Caco-2 (cell line): ENCODE measurements at regions of chr4 and their contacts with region 1.

Region 1: GRCh38 chr4:47383829-47384427 is 79.6 kb downstream of the COMMD8 start:
- DNase-seq: peak in 1 of 2 experiments; percentile 5
- H3K4me3 ChIP-seq: no peak overlapping the region
- H3K4me3 Mint-ChIP-seq: no peak overlapping the region
- H3K27ac Mint-ChIP-seq: no peak overlapping the region
- H3K4me1 ChIP-seq: no peaks in the 10 kb centered on the region
- H3K4me1 Mint-ChIP-seq: no peaks in the 10 kb centered on the region
- H3K27me3 ChIP-seq: no peaks in the 10 kb centered on the region; the same call in 1 of the 2 replicates
- H3K27me3 Mint-ChIP-seq: no peaks in the 10 kb centered on the region
- CTCF ChIP-seq: peak; percentile 19 to 52

Region 2: GRCh38 chr4:47106561-47106960 is 277.4 kb before region 1 on chr4:
- CTCF ChIA-PET with region 1: no interaction called
- POLR2A ChIA-PET with region 1: no interaction called
- intact Hi-C with region 1: loop called (anchors 5 kb)
- DNase-seq: no peak
- H3K4me3 ChIP-seq: no peak overlapping the region
- H3K4me3 Mint-ChIP-seq: no peak overlapping the region
- H3K27ac Mint-ChIP-seq: no peak overlapping the region
- H3K4me1 ChIP-seq: no peaks in the 10 kb centered on the region
- H3K4me1 Mint-ChIP-seq: no peaks in the 10 kb centered on the region
- H3K27me3 ChIP-seq: no peaks in the 10 kb centered on the region
- H3K27me3 Mint-ChIP-seq: peaks cover 5% of the 10 kb centered on the region
- CTCF ChIP-seq: no peak

Region 3: GRCh38 chr4:47122592-47123291 is 261.2 kb before region 1 on chr4:
- CTCF ChIA-PET with region 1: interaction called, 3 read pairs
- POLR2A ChIA-PET with region 1: no interaction called
- intact Hi-C with region 1: loop called (anchors 2 kb)
- DNase-seq: peak; percentile 69 to 80
- H3K4me3 ChIP-seq: no peak overlapping the region
- H3K4me3 Mint-ChIP-seq: no peak overlapping the region
- H3K27ac Mint-ChIP-seq: no peak overlapping the region
- H3K4me1 ChIP-seq: no peaks in the 10 kb centered on the region
- H3K4me1 Mint-ChIP-seq: no peaks in the 10 kb centered on the region
- H3K27me3 ChIP-seq: no peaks in the 10 kb centered on the region
- H3K27me3 Mint-ChIP-seq: no peaks in the 10 kb centered on the region
- CTCF ChIP-seq: peak; percentile 70 to 82